Dorsolateral prefrontal cortex (tissue), 120 donors: ENCODE measurements at regions of chr20 and their contacts with region 1.

Region 1: GRCh38 chr20:57323034-57323433 is 6.6 kb upstream of the SPO11 start:
- DNase-seq: peak in 4 of 10 donors; percentile 35 to 72 (median 55)
- H3K4me3 ChIP-seq: no peak overlapping the region
- H3K27ac ChIP-seq: peak overlapping the region in 3 of 59 donors; percentile 3 to 21 (median 9)
- H3K27me3 ChIP-seq: peaks cover 0 to 9% (median 0%) of the 10 kb centered on the region in 45 donors
- CTCF ChIP-seq: no peak

Region 2: DNA sequence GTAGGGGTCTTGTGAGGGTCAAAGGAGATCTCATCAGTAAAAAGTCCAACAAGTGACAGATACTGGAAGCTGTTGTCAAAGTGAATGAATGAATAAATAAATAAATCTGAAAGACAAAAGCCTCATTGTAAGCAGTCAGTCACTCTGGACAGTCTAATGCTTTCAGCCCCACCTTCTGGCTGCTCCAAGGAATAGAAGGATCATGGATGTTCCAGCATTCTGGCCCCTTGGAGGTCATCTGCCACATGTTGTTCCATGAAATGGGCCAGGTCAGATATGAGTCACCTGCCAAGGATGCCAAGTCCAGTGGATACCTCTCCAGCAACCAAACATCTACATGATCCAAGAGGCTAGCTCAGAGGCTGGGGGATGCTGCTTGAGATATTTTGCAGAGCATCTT is 242.2 kb before region 1 on chr20:
- intact Hi-C with region 1: no loop called
- DNase-seq: no peak
- H3K4me3 ChIP-seq: no peak overlapping the region
- H3K27ac ChIP-seq: peak overlapping the region in 2 of 59 donors; percentile 1 to 60
- H3K27me3 ChIP-seq: peaks cover 0 to 13% (median 0%) of the 10 kb centered on the region in 45 donors
- CTCF ChIP-seq: peak in 52 of 56 donors; percentile 13 to 79 (median 51)

Region 3: DNA sequence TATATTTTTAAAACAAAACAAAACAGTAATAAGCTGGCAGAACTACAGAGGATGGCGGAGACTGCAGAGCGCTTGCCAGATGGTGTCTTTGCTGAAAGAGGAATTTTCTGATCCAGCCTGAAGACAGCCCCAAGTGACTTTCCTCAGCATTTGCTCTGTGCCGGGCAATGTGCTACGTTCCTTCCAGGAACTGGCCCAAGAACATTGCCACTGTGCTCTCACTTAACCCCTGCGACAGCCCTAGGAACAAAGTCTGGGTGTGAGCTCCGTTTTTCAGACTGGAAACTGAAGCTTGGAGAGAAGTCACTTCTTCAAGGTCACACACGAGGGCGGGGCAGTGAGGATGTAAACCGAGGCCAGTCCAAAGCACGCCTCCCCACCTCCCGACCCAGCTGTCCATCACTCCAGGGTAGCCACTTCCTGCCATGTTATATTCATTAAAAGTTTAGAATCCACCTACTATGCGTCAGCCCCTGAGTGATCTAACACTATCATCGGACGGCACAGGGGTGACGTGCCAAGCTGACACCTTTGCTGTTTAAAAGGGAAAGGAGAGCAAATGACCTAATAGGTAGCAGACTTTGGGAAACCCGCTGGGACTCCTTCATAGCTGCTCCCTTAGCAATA is 34.3 kb before region 1 on chr20:
- intact Hi-C with region 1: loop called in 1 of 2 experiments (anchors 5 kb)
- DNase-seq: no peak
- H3K4me3 ChIP-seq: peak overlapping the region in 2 of 59 donors; percentile 6 to 10
- H3K27ac ChIP-seq: peak overlapping the region in 5 of 59 donors; percentile 13 to 57 (median 44)
- H3K27me3 ChIP-seq: peaks cover 0 to 54% (median 17%) of the 10 kb centered on the region in 45 donors
- CTCF ChIP-seq: no peak